Activated CD4-positive, alpha-beta T cell treated with anti-CD3 and anti-CD28 coated beads for 36 hours (primary cell): ENCODE measurements at regions of chr19 and their contacts with region 1.

Region 1: GRCh38 chr19:3844596-3844995 is 24.2 kb downstream of the ZFR2 start:
- DNase-seq: no peak
- ATAC-seq: no peak
- H3K4me3 Mint-ChIP-seq: no peak overlapping the region
- H3K27ac Mint-ChIP-seq: no peak overlapping the region
- H3K4me1 Mint-ChIP-seq: no peaks in the 10 kb centered on the region
- H3K27me3 Mint-ChIP-seq: no peaks in the 10 kb centered on the region

Region 2: GRCh38 chr19:3890591-3890990 is 46.0 kb after region 1 on chr19:
- CTCF ChIA-PET with region 1: no interaction called
- POLR2A ChIA-PET with region 1: no interaction called
- intact Hi-C with region 1: no loop called
- DNase-seq: no peak
- ATAC-seq: no peak
- H3K4me3 Mint-ChIP-seq: no peak overlapping the region
- H3K27ac Mint-ChIP-seq: no peak overlapping the region
- H3K4me1 Mint-ChIP-seq: no peaks in the 10 kb centered on the region
- H3K27me3 Mint-ChIP-seq: peaks cover 2% of the 10 kb centered on the region

Region 3: DNA sequence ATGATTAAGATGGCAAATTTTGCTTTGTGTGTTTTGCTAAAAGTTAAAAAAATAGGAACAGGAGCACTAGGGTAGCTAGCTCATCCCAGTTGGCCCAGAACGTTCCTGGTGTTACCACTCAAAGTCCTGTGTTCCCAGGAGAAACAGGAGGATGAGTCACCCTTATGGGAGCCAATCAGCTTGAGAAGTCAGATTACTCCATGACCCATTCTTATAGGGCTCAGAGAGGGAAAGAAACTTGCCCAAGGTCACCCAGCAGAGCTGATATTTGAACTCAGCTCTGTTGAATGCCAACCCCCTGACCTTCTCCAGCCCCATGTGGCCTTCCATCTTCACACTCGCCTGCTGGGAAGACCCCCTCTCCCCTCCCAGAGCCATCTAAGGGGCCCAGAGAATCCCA is 101.2 kb after region 1 on chr19:
- CTCF ChIA-PET with region 1: no interaction called
- POLR2A ChIA-PET with region 1: interaction called, 11 read pairs
- intact Hi-C with region 1: no loop called
- DNase-seq: no peak
- ATAC-seq: no peak
- H3K4me3 Mint-ChIP-seq: no peak overlapping the region
- H3K27ac Mint-ChIP-seq: no peak overlapping the region
- H3K4me1 Mint-ChIP-seq: no peaks in the 10 kb centered on the region
- H3K27me3 Mint-ChIP-seq: no peaks in the 10 kb centered on the region

Region 4: GRCh38 chr19:4246767-4247593 is 402.4 kb after region 1 on chr19 and contains the start of gene YJU2:
- CTCF ChIA-PET with region 1: no interaction called
- POLR2A ChIA-PET with region 1: no interaction called
- intact Hi-C with region 1: no loop called
- DNase-seq: peak; percentile 100
- ATAC-seq: peak; percentile 97
- H3K4me3 Mint-ChIP-seq: peak within 1 kb of the TSS; percentile 84
- H3K27ac Mint-ChIP-seq: peak within 1 kb of the TSS; percentile 100
- H3K4me1 Mint-ChIP-seq: peaks cover 9% of the 10 kb centered on the region
- H3K27me3 Mint-ChIP-seq: no peaks in the 10 kb centered on the region
- total RNA-seq, gene YJU2: 29.8 to 34.8 TPM